ENCODE measurements at regions of chr11 and their contacts with region 1.

Region 1: GRCh38 chr11:70073871-70074371 is 4.2 kb upstream of the ANO1 start:
- DNase-seq: peak in 1 of 2 donors; percentile 86
- H3K4me3 ChIP-seq: no peak overlapping the region
- H3K27ac ChIP-seq: peak overlapping the region; percentile 85 to 89
- H3K4me1 ChIP-seq: peaks cover 0 to 19% of the 10 kb centered on the region in 2 donors
- H3K27me3 ChIP-seq: no peaks in the 10 kb centered on the region
- CTCF ChIP-seq: no peak

Region 2: DNA sequence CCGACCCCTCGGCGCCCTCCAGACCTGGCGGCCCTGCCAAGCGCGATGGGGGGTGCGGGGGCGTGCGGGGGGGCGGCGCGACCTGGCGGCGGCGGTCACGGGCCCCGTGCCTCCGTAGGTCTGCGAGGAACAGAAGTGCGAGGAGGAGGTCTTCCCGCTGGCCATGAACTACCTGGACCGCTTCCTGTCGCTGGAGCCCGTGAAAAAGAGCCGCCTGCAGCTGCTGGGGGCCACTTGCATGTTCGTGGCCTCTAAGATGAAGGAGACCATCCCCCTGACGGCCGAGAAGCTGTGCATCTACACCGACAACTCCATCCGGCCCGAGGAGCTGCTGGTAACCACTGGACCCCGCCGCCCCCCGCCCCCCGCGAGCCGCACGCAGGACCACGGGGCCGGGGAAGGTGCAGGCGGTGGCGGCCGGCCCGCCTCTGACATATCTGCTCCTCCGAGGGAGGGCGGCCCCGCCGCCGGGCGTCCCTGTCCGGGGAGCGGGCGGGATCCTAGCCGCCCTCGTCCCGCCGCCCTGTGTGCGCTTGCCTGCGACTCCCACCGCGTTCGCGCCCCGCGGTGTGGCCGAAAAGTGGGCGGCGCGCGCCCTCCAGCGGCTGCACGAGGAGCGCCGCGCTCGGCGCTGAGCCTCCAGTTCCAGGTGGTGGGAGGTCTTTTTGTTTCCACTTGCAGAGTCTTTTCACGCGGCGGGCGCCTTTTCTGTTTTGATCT is 430.8 kb before region 1 on chr11:
- intact Hi-C with region 1: no loop called
- DNase-seq: peak in 1 of 2 donors; percentile 86
- H3K4me3 ChIP-seq: peak overlapping the region; percentile 88
- H3K27ac ChIP-seq: peak overlapping the region; percentile 77 to 84
- H3K4me1 ChIP-seq: peaks cover 10 to 35% of the 10 kb centered on the region in 2 donors
- H3K27me3 ChIP-seq: no peaks in the 10 kb centered on the region
- CTCF ChIP-seq: peak; percentile 77 to 98 (median 91)

Region 3: GRCh38 chr11:69949327-69949726 is 124.6 kb before region 1 on chr11:
- intact Hi-C with region 1: loop called (anchors 10 kb)
- DNase-seq: peak; percentile 32 to 90
- H3K4me3 ChIP-seq: no peak overlapping the region
- H3K27ac ChIP-seq: peak overlapping the region; percentile 59 to 78
- H3K4me1 ChIP-seq: peaks cover 15 to 23% of the 10 kb centered on the region in 2 donors
- H3K27me3 ChIP-seq: no peaks in the 10 kb centered on the region
- CTCF ChIP-seq: no peak

Region 4: GRCh38 chr11:70005107-70005818 is 68.7 kb before region 1 on chr11:
- intact Hi-C with region 1: loop called (anchors 5 kb)
- DNase-seq: peak in 1 of 2 donors; percentile 79
- H3K4me3 ChIP-seq: no peak overlapping the region
- H3K27ac ChIP-seq: peak overlapping the region; percentile 82 to 86
- H3K4me1 ChIP-seq: peaks cover 5 to 21% of the 10 kb centered on the region in 2 donors
- H3K27me3 ChIP-seq: no peaks in the 10 kb centered on the region
- CTCF ChIP-seq: no peak

Region 5: GRCh38 chr11:70099578-70100279 is 25.8 kb after region 1 on chr11:
- intact Hi-C with region 1: loop called (anchors 2 kb)
- DNase-seq: no peak
- H3K4me3 ChIP-seq: no peak overlapping the region
- H3K27ac ChIP-seq: peak overlapping the region; percentile 74 to 78
- H3K4me1 ChIP-seq: peaks cover 11 to 61% of the 10 kb centered on the region in 2 donors
- H3K27me3 ChIP-seq: no peaks in the 10 kb centered on the region
- CTCF ChIP-seq: no peak

Region 6: GRCh38 chr11:70191495-70192140 is 117.7 kb after region 1 on chr11:
- intact Hi-C with region 1: loop called (anchors 5 kb)
- DNase-seq: peak in 1 of 2 donors; percentile 85
- H3K4me3 ChIP-seq: no peak overlapping the region
- H3K27ac ChIP-seq: no peak overlapping the region
- H3K4me1 ChIP-seq: peaks cover 0 to 11% of the 10 kb centered on the region in 2 donors
- H3K27me3 ChIP-seq: no peaks in the 10 kb centered on the region
- CTCF ChIP-seq: peak; percentile 91 to 92 (median 92)

Measured in ascending aorta (tissue), 2 donors.